Prostate gland (tissue), 2 donors: ENCODE measurements at regions of chr3 and their contacts with region 1.

Region 1: GRCh38 chr3:183381179-183381578 is 47.2 kb downstream of the MCF2L2 start:
- DNase-seq: no peak
- H3K4me3 ChIP-seq: no peak overlapping the region
- H3K27ac ChIP-seq: no peak overlapping the region
- H3K4me1 ChIP-seq: no peaks in the 10 kb centered on the region
- H3K27me3 ChIP-seq: no peaks in the 10 kb centered on the region
- CTCF ChIP-seq: no peak
- POLR2A ChIP-seq: no peak

Region 2: DNA sequence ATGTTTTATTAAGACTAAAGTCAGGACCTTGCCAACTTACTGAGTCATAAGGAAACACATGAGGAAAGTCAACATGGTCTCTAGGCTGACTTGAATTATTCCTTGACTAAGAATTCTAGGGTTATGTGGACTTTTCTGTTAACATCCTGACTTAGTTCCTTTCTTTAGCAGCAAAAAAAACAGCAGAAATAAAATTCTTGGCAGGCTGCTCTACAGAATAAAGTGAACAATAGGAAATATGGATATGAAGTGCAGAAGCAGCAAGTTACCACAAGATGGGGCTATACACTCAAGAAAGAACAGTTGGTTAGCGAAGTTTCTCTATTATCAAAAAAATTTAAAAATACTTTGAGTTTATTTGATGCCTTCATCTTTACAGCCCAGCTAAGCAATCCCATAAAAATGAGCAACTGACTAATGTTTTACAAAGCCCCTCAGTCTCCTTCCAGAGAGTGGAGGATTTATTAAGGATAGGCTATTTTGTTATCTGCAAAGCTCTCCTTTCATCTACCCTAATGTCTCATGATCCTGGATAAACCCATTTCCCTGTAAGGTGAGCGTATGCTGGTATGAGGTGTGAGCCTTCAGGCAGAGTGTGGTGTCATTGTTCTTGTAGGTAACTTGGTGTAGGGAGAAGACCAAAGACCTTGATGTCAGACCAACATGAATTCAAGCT is 258.8 kb before region 1 on chr3:
- intact Hi-C with region 1: loop called (anchors 2 kb)
- DNase-seq: no peak
- H3K4me3 ChIP-seq: no peak overlapping the region
- H3K27ac ChIP-seq: no peak overlapping the region
- H3K4me1 ChIP-seq: no peaks in the 10 kb centered on the region
- H3K27me3 ChIP-seq: no peaks in the 10 kb centered on the region
- CTCF ChIP-seq: peak; percentile 56 to 94 (median 90)
- POLR2A ChIP-seq: no peak

Region 3: DNA sequence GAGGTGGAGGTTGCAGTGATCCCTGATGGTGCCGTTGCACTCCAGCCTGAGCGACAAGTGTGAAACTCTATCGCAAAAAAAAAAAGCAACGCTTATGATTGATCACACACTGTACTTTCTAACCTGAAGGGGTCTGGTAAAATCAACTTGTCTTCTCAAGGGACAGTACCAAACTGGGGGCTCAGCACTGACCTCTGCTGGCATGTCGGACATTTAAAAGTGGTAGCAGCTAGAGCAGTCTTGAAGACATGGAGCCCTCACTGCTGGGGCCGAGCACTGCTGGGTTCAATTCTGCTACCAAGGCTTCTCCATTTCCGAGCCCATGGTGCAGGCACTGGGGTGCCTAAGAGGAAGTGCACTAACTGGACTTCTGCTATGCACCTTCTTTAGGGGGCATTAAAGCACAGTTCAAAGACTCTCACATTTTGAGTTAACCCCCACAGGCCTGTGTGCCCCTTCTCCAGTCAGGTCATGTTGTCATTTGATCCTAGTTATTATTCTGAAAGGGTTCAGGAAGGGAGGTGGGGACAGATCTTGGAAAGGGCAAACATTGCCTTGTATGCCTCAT is 192.2 kb before region 1 on chr3:
- intact Hi-C with region 1: loop called (anchors 2 kb)
- DNase-seq: no peak
- H3K4me3 ChIP-seq: no peak overlapping the region
- H3K27ac ChIP-seq: no peak overlapping the region
- H3K4me1 ChIP-seq: no peaks in the 10 kb centered on the region
- H3K27me3 ChIP-seq: no peaks in the 10 kb centered on the region
- CTCF ChIP-seq: peak in 2 of 4 experiments; percentile 13 to 16
- POLR2A ChIP-seq: no peak

Region 4: GRCh38 chr3:183252973-183253901 is 127.9 kb before region 1 on chr3 and contains the start of gene B3GNT5:
- intact Hi-C with region 1: loop called (anchors 5 kb)
- DNase-seq: peak; percentile 91
- H3K4me3 ChIP-seq: peak within 1 kb of the TSS; percentile 75 to 87
- H3K27ac ChIP-seq: peak within 1 kb of the TSS; percentile 94 to 96
- H3K4me1 ChIP-seq: no peaks in the 10 kb centered on the region
- H3K27me3 ChIP-seq: no peaks in the 10 kb centered on the region
- CTCF ChIP-seq: no peak
- POLR2A ChIP-seq: peak; percentile 35
- total RNA-seq, gene B3GNT5: 5.9 to 7.2 TPM